ENCODE measurements at regions of chrX and their contacts with region 1.

Region 1: GRCh38 chrX:133495464-133496391 is 80.4 kb upstream of the GPC4 start:
- DNase-seq: no peak
- H3K4me3 ChIP-seq: no peak overlapping the region
- H3K27ac ChIP-seq: no peak overlapping the region
- H3K4me1 ChIP-seq: no peaks in the 10 kb centered on the region
- H3K27me3 ChIP-seq: no peaks in the 10 kb centered on the region
- CTCF ChIP-seq: no peak

Region 2: DNA sequence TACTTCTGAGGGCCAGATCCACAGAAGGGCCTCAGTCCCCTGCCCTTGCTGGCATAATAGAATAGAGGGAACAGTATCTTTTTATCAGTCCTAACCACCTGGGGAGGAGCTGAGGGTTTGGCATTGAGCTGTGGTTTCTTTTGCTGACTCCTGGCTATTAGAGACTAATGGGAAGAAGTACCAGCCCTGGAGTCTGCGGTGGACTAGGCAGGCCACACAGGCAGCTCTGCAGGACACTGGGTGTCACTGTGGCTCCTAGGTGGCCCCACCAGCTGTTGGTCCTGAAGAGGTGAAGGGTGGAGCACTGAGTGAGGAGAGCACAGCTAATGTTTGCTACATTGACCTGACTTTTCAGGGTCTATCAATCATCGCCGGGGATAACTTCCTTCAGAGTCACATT is 27.7 kb before region 1 on chrX:
- CTCF ChIA-PET with region 1: no interaction called
- POLR2A ChIA-PET with region 1: interaction called, 10 read pairs
- intact Hi-C with region 1: no loop called
- DNase-seq: peak in 1 of 2 experiments; percentile 17
- H3K4me3 ChIP-seq: no peak overlapping the region
- H3K27ac ChIP-seq: no peak overlapping the region
- H3K4me1 ChIP-seq: no peaks in the 10 kb centered on the region
- H3K27me3 ChIP-seq: no peaks in the 10 kb centered on the region
- CTCF ChIP-seq: no peak